ENCODE measurements at regions of chr12 and their contacts with region 1.

Region 1: GRCh38 chr12:120495723-120496412 is at the start of gene DYNLL1:
- DNase-seq: peak; percentile 93 to 100 (median 96)

Region 2: DNA sequence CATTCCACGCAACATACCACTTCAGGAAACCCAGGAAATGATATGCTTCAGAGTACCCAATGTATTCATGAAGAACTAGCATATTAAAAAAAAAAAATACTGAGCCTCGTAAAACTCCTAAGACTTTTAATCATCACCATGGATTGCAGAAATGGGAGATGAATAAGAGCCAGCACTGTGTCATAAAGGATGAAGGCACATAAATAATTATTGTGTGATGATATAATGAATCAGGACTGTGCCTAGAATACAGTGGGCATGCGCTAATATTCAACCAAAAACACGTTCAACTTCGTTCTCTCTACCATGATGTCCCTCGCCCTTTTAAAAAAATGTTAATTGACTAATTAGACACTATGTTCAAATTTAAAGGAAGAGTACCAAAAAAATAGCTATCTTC is 687.4 kb before region 1 on chr12:
- intact Hi-C with region 1: no loop called
- DNase-seq: no peak

Region 3: GRCh38 chr12:120453977-120454376 is 41.9 kb before region 1 on chr12:
- intact Hi-C with region 1: no loop called
- DNase-seq: peak in 1 of 10 donors; percentile 2

Region 4: GRCh38 chr12:120528861-120529525 is 33.1 kb after region 1 on chr12 and contains the start of gene COQ5:
- intact Hi-C with region 1: loop called (anchors 2 kb)
- DNase-seq: peak; percentile 89 to 99 (median 94)

Region 5: DNA sequence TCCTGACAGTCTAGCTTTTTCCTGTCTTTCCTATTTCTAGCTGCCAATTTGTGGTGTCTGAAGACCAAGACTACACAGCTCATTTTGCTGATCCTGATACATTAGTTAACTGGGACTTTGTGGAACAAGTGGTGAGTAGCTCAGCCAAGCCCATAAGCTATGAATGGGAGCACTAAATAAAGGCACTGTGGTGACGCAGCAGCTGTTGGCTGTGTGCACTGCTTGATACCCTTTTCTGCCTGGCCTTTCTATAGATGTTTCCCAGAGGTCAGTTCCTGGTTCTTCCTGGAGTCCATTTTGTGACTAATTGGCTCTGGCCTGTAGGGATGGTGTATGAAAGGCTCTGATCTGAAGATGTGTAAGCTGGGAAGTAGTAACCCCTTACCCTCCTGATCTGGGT is 58.8 kb after region 1 on chr12:
- intact Hi-C with region 1: no loop called
- DNase-seq: no peak

Measured in posterior cingulate gyrus (tissue), 11 donors.